Activated CD8-positive, alpha-beta memory T cell treated with anti-CD3 and anti-CD28 coated beads, Interleukin-2, amount 10 ng/mL, durations not matched to agents 7 days and 5 days (primary cell): ENCODE measurements at regions of chr19 and their contacts with region 1.

Region 1: GRCh38 chr19:41837981-41838708 is 6.3 kb downstream of the LYPD4 start:
- DNase-seq: no peak
- ATAC-seq: no peak
- H3K4me3 Mint-ChIP-seq: no peak overlapping the region
- H3K27ac Mint-ChIP-seq: no peak overlapping the region
- H3K4me1 Mint-ChIP-seq: no peaks in the 10 kb centered on the region
- H3K27me3 Mint-ChIP-seq: peaks cover 37% of the 10 kb centered on the region

Region 2: DNA sequence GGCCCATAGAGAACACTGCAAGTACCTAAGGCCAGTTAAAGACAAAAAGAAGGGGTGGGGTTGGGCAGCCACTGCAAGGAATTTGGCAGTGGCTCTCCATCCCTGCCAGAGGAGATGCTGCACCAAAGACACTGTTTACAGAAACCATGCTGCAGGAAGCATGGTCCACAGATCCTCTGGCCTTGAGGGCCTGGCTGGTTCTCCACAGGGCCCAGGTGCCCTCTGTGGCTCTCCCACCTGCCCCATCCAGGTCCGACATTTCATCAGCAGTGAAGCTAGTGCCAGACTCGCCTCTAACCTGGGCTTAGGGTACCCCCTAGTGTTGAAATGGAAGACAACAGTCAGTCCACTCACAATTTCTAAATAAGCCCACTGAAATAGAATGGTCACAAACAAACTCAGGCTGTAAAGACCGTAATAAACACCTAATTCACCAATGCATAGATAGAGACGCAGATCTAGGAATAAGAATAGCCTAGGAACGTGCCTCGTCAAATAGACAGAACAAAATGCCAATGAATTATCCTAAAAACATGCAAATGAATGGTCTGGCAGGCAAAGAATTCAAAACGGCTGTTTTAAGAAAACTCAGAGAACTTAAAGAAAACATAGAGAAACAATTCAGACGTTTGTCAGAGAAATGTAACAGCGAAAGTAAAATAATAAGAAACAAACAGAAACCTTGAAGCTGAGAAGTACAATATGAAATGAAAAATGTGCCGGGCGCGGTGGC is 17.0 kb before region 1 on chr19:
- CTCF ChIA-PET with region 1: interaction called, 10 read pairs
- DNase-seq: peak; percentile 56
- ATAC-seq: peak; percentile 78
- H3K4me3 Mint-ChIP-seq: no peak overlapping the region
- H3K27ac Mint-ChIP-seq: no peak overlapping the region
- H3K4me1 Mint-ChIP-seq: peaks cover 3% of the 10 kb centered on the region
- H3K27me3 Mint-ChIP-seq: peaks cover 39% of the 10 kb centered on the region

Region 3: GRCh38 chr19:41853344-41854167 is 15.4 kb after region 1 on chr19:
- CTCF ChIA-PET with region 1: interaction called, 14 read pairs
- DNase-seq: no peak
- ATAC-seq: no peak
- H3K4me3 Mint-ChIP-seq: no peak overlapping the region
- H3K27ac Mint-ChIP-seq: no peak overlapping the region
- H3K4me1 Mint-ChIP-seq: no peaks in the 10 kb centered on the region
- H3K27me3 Mint-ChIP-seq: peaks cover 40% of the 10 kb centered on the region